ENCODE measurements at regions of chr5 and their contacts with region 1.

Region 1: DNA sequence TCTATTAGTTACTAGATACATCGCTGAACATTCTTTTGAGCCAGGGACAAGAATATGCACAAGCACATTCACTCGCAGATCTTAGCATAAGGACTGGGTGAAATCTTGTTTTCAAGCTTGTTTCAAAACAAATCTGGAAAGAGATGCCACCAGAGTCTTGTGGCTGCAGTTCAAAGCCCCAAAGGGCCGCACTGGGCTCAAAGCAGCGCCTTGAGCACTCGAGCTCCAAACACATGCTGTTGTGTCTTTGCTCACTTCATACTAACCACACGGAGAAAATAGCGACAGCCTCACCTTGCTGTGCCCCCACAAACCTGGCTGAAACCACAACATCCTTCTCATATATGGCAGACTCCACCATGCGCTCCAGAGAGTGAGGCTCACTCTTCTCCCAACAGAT is 34.2 kb upstream of the IL7R start:
- DNase-seq: peak; percentile 73
- ATAC-seq: peak; percentile 55
- H3K4me3 Mint-ChIP-seq: peak overlapping the region; percentile 17
- H3K27ac Mint-ChIP-seq: peak overlapping the region; percentile 71
- H3K4me1 Mint-ChIP-seq: peaks cover 87% of the 10 kb centered on the region
- H3K27me3 Mint-ChIP-seq: no peaks in the 10 kb centered on the region

Region 2: GRCh38 chr5:35811108-35811741 is 11.3 kb before region 1 on chr5:
- CTCF ChIA-PET with region 1: interaction called, 14 read pairs
- DNase-seq: peak; percentile 79
- ATAC-seq: peak; percentile 80
- H3K4me3 Mint-ChIP-seq: peak overlapping the region; percentile 48
- H3K27ac Mint-ChIP-seq: peak overlapping the region; percentile 92
- H3K4me1 Mint-ChIP-seq: peaks cover 51% of the 10 kb centered on the region
- H3K27me3 Mint-ChIP-seq: no peaks in the 10 kb centered on the region

Region 3: DNA sequence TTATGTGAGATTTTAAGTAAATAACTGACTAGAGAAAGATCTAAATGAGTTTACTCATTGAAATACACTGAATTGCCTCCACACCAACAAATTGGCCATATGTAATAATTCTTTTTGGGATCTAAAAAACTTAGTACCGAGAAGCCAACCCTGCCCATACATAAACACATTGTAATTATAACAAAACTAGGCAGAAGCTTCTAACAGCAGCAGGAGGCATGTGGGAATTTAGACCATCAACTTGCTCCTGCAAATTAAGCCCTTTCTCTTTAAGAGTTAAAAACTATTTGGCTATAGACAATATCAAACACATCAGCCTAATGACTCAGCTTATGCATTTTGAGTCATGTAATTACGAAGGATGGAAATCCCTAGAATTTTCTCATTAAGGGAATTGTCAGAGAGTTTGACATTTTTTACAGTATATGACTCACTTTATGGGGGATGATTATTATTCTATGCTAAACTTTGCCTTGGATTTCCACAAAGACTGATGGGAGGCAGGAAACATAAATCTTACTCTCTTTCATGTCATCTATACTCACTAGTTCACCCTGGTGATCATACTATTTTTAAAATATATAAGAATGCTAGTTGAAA is 35.2 kb after region 1 on chr5:
- CTCF ChIA-PET with region 1: interaction called, 13 read pairs
- DNase-seq: no peak
- ATAC-seq: no peak
- H3K4me3 Mint-ChIP-seq: peak overlapping the region; percentile 80
- H3K27ac Mint-ChIP-seq: peak overlapping the region; percentile 90
- H3K4me1 Mint-ChIP-seq: peaks cover 95% of the 10 kb centered on the region
- H3K27me3 Mint-ChIP-seq: no peaks in the 10 kb centered on the region

Region 4: GRCh38 chr5:36073595-36074216 is 251.2 kb after region 1 on chr5:
- CTCF ChIA-PET with region 1: no interaction called
- DNase-seq: peak; percentile 49
- ATAC-seq: peak; percentile 83
- H3K4me3 Mint-ChIP-seq: no peak overlapping the region
- H3K27ac Mint-ChIP-seq: no peak overlapping the region
- H3K4me1 Mint-ChIP-seq: peaks cover 16% of the 10 kb centered on the region
- H3K27me3 Mint-ChIP-seq: peaks cover 48% of the 10 kb centered on the region